Dorsolateral prefrontal cortex (tissue), 120 donors: ENCODE measurements at regions of chr12 and their contacts with region 1.

Region 1: DNA sequence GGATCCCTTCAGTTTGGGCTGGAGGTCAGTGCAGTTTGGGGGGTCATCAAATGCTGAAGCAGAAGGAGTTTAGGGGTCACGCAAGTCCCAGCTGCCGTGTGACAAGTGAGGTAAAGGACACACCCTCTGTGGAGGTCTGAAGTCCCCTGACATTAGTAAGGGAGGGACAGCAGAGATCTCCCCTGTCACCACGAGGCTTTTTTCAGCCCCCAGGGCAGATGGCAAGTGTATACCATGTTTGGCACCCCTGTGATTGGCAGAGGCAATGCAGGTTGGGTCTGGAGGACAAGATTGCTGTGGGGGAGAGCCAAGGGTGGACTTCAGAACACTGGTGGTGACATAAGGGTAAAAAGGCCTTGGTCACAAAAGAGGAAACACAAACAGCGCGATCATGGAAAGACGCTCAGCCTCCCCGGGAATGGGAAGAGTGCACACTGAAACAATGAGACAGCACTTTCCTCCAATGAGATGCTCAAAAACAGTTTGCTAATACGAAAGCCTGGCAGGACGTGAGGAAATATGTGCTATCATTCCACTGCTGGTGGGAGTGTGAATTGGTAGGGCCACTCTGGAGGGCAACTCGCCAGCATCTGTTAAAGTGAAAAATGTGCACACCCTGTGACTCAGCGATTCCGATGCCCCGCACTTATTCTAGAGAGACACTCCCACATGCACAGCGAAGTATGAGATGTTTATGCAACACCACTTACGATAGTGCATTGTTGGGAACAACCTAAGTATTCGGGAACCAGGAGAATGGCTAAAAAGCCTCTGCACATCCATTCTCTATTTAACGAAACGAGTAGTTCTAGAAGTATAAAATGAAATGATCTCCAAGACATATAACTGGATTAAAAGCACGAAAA is 14.4 kb upstream of the CD27 start:
- DNase-seq: peak in 7 of 10 donors; percentile 50 to 77 (median 57)
- H3K4me3 ChIP-seq: peak overlapping the region in 56 of 59 donors; percentile 5 to 66 (median 43)
- H3K27ac ChIP-seq: peak overlapping the region; percentile 2 to 90 (median 80)
- H3K27me3 ChIP-seq: no peaks in the 10 kb centered on the region
- CTCF ChIP-seq: peak in 3 of 56 donors; percentile 9 to 15 (median 13)

Region 2: DNA sequence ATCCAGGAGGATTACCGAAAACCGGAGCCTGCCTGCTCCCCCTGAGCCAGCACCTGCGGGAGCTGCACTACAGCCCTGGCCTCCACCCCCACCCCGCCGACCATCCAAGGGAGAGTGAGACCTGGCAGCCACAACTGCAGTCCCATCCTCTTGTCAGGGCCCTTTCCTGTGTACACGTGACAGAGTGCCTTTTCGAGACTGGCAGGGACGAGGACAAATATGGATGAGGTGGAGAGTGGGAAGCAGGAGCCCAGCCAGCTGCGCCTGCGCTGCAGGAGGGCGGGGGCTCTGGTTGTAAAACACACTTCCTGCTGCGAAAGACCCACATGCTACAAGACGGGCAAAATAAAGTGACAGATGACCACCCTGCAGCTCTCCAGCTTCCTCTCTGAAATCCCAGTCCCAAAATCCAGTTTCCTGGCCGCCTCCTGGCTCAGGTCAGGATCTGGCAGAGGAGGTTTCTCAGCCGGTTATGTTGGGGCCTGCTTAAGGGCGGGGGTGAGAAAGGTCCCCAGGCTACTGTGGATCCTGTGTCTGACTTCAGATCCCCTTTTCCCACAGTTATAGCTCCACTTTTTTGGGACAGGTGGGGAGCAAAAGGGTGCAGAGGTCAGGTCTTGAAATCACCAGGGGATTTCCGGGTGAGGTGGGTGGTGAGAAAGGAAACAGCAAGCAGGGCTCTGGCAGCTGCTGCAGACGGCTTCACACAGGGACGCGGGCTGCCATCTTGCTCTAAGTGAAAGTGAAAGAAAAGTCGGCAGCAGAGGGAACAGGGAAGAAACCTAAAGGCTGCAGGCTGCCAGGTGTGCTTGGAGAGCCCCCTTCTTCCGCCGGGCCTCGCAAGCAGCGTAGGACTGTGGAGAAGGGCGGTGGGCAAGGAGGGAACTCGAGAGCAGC is 21.2 kb after region 1 on chr12 and contains the start of gene TAPBPL:
- intact Hi-C with region 1: loop called in 1 of 2 experiments (anchors 2 kb)
- DNase-seq: peak; percentile 63 to 93 (median 89)
- H3K4me3 ChIP-seq: peak within 1 kb of the TSS; percentile 54 to 91 (median 77)
- H3K27ac ChIP-seq: peak within 1 kb of the TSS; percentile 82 to 99 (median 98)
- H3K27me3 ChIP-seq: no peaks in the 10 kb centered on the region
- CTCF ChIP-seq: peak in 3 of 56 donors; percentile 4 to 12 (median 11)
- total RNA-seq, gene TAPBPL: 4.2 to 19.6 (median 11.2) TPM

Region 3: DNA sequence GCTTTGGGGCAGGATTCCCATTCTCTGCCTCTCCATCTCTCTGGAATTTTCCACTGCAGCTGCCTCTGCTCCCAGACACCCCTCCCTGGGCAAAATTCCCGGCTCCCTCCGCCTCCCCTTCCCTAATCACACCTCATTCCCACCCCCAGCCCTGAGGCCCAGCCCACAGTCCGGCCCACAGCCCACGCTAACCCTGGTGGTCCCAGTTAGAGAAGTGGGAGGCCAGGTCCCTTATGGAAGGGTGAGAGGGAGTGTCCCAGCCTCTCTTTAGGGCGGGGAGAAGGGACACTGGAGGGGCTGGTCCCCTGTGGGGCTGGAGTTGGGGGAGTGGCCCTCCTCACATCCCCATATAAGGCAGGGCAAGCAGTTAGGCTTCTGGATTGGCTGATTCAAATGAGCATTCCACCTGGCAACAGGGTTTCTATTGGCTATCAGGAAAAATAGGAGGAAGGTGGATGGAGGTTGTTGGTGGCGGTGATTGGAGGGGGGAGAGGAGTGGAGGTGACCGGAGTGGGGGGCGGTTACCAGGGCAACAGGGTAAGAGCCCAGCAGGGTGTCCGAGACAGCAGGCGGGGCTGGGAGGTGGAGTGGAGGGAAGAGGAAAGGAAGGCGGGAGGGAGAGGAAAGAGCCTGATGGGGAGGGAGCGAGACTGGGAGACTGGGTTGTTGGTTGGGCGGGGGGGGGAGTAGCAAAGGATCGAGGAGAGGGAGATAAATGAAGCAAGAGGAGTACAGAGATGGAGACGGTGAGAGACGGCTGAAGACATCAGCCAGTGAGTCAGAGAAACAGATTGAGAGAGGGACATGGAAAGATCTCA is 333.9 kb after region 1 on chr12:
- intact Hi-C with region 1: no loop called
- DNase-seq: peak; percentile 53 to 99 (median 88)
- H3K4me3 ChIP-seq: peak overlapping the region in 58 of 59 donors; percentile 7 to 83 (median 46)
- H3K27ac ChIP-seq: peak overlapping the region; percentile 41 to 99 (median 93)
- H3K27me3 ChIP-seq: no peaks in the 10 kb centered on the region
- CTCF ChIP-seq: peak in 1 of 56 donors; percentile 13